SK-N-SH (cell line): ENCODE measurements at regions of chr7 and their contacts with region 1.

Region 1: GRCh38 chr7:134514663-134515062 is 12.7 kb upstream of the AKR1B10 start:
- DNase-seq: peak; percentile 68
- H3K4me3 ChIP-seq: no peak overlapping the region
- H3K27ac ChIP-seq: no peak overlapping the region
- H3K4me1 ChIP-seq: peaks cover 0 to 6% of the 10 kb centered on the region in 2 experiments; a peak in 1 of 4 replicates
- H3K27me3 ChIP-seq: 0 out of 2 replicates have a peak, but pooled peaks cover 16% of the 10 kb centered on the region
- CTCF ChIP-seq: peak; percentile 98
- EP300 ChIP-seq: no peak
- RAD21 ChIP-seq: peak; percentile 66

Region 2: GRCh38 chr7:134287916-134288659 is 226.6 kb before region 1 on chr7:
- CTCF ChIA-PET with region 1: no interaction called
- POLR2A ChIA-PET with region 1: no interaction called
- DNase-seq: no peak
- H3K4me3 ChIP-seq: no peak overlapping the region
- H3K27ac ChIP-seq: peak overlapping the region in 1 of 2 experiments; percentile 3; a peak in 1 of 4 replicates
- H3K4me1 ChIP-seq: peaks cover 0 to 5% of the 10 kb centered on the region in 2 experiments; a peak in 2 of 4 replicates
- H3K27me3 ChIP-seq: no peaks in the 10 kb centered on the region
- CTCF ChIP-seq: no peak
- EP300 ChIP-seq: no peak
- RAD21 ChIP-seq: no peak

Region 3: DNA sequence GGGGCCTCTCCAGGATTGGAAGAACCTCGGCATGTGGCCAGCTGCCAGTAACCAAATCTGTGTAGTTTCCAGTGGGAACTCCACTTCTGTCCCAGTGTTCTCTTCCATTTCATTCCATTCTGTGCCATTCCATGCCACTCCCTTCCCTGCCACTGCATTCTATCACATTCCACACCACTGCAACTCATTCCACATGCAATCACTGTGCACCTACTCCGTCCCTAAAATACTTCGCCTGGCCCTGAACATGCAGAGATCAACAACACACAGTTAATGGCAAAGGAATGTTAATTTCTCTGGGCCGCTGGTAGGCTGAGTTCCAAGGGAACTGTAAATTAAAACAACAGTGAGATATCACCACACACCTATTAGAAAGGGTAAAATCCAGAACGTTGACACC is 120.6 kb before region 1 on chr7:
- CTCF ChIA-PET with region 1: no interaction called
- POLR2A ChIA-PET with region 1: no interaction called
- DNase-seq: no peak
- H3K4me3 ChIP-seq: no peak overlapping the region
- H3K27ac ChIP-seq: no peak overlapping the region
- H3K4me1 ChIP-seq: no peaks in the 10 kb centered on the region
- H3K27me3 ChIP-seq: peaks cover 6% of the 10 kb centered on the region; the same call in 1 of the 2 replicates
- CTCF ChIP-seq: no peak
- EP300 ChIP-seq: no peak
- RAD21 ChIP-seq: no peak

Region 4: DNA sequence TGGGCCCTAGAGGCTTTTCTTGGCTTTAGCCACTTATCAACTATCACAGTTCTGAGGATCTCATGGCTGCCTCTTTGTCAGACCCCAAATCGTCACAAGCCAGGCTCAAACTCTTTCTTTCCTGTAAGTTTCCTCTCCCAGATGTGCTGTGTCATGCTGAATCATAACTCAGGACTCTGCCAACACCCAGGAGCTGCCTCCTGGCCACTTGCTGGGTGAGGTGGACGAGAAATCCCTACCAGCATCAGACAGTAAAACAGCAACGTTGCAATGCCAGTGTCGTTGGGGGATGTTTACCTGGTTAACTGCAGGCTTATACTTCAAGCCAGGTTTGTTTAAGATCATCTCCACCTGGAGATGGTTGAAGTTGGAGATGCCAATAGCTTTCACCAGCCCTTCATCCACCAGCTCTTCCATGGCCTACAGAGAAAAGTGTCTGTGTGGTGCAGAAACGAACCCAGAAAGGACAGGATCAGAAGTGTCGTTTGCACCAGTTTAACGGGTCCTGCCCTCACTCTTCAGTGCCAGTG is 65.9 kb before region 1 on chr7:
- CTCF ChIA-PET with region 1: interaction called, 21 read pairs
- POLR2A ChIA-PET with region 1: no interaction called
- DNase-seq: no peak
- H3K4me3 ChIP-seq: no peak overlapping the region
- H3K27ac ChIP-seq: peak overlapping the region in 1 of 2 experiments; percentile 43; a peak in 2 of 4 replicates
- H3K4me1 ChIP-seq: peaks cover 11 to 19% of the 10 kb centered on the region in 2 experiments; a peak in 2 of 4 replicates
- H3K27me3 ChIP-seq: no peaks in the 10 kb centered on the region
- CTCF ChIP-seq: no peak
- EP300 ChIP-seq: no peak
- RAD21 ChIP-seq: no peak

Region 5: GRCh38 chr7:134480736-134481135 is 33.9 kb before region 1 on chr7:
- CTCF ChIA-PET with region 1: interaction called, 50 read pairs
- POLR2A ChIA-PET with region 1: no interaction called
- DNase-seq: no peak
- H3K4me3 ChIP-seq: no peak overlapping the region
- H3K27ac ChIP-seq: no peak overlapping the region
- H3K4me1 ChIP-seq: peaks cover 0 to 7% of the 10 kb centered on the region in 2 experiments; a peak in 2 of 4 replicates
- H3K27me3 ChIP-seq: no peaks in the 10 kb centered on the region; the same call in 1 of the 2 replicates
- CTCF ChIP-seq: no peak
- EP300 ChIP-seq: no peak
- RAD21 ChIP-seq: no peak

Region 6: DNA sequence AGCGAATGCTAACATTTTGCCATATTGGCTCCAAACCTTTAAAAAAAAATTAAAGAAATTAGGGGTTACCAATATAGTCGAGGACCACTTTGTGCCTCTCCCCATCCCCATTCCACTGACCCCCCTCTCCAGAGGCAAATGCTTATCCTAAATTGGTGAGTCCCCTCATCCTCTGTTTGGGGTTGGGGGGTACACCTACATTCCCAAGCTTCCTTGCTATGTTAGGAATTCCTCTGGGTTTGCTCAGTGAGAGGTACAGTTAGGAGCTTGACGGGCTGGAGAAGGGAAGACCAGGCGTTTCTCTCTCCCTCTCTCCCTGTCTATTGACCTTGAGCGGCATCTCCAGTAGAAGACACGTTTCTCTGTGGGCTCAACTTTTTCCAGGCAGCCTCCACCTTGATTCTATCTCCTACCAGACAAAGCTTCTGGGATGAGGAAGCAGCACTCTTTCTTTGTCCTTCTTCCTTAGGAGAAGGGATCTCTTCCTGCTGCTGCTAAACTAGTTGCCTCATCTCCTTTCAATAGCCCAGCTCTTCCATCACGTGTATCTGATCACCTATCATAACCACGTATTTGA is 27.6 kb after region 1 on chr7:
- CTCF ChIA-PET with region 1: interaction called, 28 read pairs
- POLR2A ChIA-PET with region 1: no interaction called
- DNase-seq: no peak
- H3K4me3 ChIP-seq: no peak overlapping the region
- H3K27ac ChIP-seq: no peak overlapping the region
- H3K4me1 ChIP-seq: no peaks in the 10 kb centered on the region; a peak in 1 of 4 replicates
- H3K27me3 ChIP-seq: peaks cover 58% of the 10 kb centered on the region
- CTCF ChIP-seq: no peak
- EP300 ChIP-seq: no peak
- RAD21 ChIP-seq: no peak

Region 7: DNA sequence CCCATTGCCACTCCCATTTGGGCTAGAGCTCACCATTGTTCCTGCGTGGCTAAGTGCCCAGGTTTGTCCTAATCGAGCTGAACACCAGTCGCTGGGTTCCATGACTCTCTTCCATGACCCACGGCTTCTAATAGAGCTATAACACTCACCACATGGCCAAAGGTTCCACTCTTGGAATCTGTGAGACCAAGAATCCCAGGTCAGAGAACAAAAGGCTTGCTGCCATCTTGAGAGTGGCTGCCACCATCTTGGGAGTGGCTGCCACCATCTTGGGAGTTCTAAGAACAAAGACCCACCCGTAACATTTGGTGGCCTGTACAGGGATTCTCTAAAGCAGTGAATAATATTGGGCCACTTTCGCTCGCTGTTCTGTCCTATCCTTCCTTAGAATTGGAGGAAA is 71.2 kb after region 1 on chr7:
- CTCF ChIA-PET with region 1: interaction called, 10 read pairs
- POLR2A ChIA-PET with region 1: no interaction called
- DNase-seq: no peak
- H3K4me3 ChIP-seq: no peak overlapping the region
- H3K27ac ChIP-seq: no peak overlapping the region
- H3K4me1 ChIP-seq: no peaks in the 10 kb centered on the region; a peak in 1 of 4 replicates
- H3K27me3 ChIP-seq: peaks cover 18% of the 10 kb centered on the region; the same call in 1 of the 2 replicates
- CTCF ChIP-seq: no peak
- EP300 ChIP-seq: no peak
- RAD21 ChIP-seq: no peak

Region 8: GRCh38 chr7:134619627-134620331 is 105.1 kb after region 1 on chr7:
- CTCF ChIA-PET with region 1: interaction called, 10 read pairs
- POLR2A ChIA-PET with region 1: no interaction called
- DNase-seq: no peak
- H3K4me3 ChIP-seq: no peak overlapping the region
- H3K27ac ChIP-seq: peak overlapping the region in 1 of 2 experiments; percentile 99; a peak in 2 of 4 replicates
- H3K4me1 ChIP-seq: peaks cover 0 to 27% of the 10 kb centered on the region in 2 experiments; a peak in 1 of 4 replicates
- H3K27me3 ChIP-seq: no peaks in the 10 kb centered on the region
- CTCF ChIP-seq: no peak
- EP300 ChIP-seq: peak in 1 of 2 experiments; percentile 48; a peak in 1 of 4 replicates
- RAD21 ChIP-seq: no peak

Region 9: DNA sequence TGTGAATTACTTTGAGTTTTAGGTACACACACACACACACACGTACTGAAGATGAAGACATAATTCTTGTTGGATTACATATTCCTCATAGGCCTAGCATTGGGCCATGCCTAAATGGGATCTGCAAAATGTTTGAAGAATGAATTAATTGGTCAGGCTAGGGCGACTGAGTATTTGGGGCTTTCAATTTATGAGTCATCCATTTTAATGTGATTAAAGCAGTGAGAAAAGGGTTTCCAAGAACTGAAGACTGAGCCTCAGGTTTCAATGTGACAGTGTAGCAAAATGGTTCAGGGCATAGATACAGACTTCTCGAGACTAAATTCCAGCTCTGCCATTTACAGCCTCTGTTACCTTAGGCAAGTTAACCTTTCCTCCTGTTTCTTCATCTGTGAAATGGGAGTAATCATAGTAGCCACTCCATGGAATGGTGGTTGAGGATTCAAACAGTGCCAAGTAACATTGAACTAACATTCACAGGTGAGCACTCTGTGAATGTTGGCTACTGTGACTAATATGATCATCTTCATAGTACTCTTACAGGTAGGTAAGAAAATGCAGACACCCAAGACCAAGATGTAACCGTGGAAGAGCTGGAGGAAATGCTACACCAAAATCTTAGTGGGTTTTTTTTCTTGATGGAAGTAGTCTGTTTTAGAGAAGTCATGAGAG is 139.6 kb after region 1 on chr7:
- CTCF ChIA-PET with region 1: no interaction called
- POLR2A ChIA-PET with region 1: no interaction called
- DNase-seq: no peak
- H3K4me3 ChIP-seq: no peak overlapping the region
- H3K27ac ChIP-seq: no peak overlapping the region; a peak in 1 of 4 replicates
- H3K4me1 ChIP-seq: peaks cover 0 to 14% of the 10 kb centered on the region in 2 experiments; a peak in 2 of 4 replicates
- H3K27me3 ChIP-seq: no peaks in the 10 kb centered on the region
- CTCF ChIP-seq: no peak
- EP300 ChIP-seq: no peak
- RAD21 ChIP-seq: no peak

Region 10: DNA sequence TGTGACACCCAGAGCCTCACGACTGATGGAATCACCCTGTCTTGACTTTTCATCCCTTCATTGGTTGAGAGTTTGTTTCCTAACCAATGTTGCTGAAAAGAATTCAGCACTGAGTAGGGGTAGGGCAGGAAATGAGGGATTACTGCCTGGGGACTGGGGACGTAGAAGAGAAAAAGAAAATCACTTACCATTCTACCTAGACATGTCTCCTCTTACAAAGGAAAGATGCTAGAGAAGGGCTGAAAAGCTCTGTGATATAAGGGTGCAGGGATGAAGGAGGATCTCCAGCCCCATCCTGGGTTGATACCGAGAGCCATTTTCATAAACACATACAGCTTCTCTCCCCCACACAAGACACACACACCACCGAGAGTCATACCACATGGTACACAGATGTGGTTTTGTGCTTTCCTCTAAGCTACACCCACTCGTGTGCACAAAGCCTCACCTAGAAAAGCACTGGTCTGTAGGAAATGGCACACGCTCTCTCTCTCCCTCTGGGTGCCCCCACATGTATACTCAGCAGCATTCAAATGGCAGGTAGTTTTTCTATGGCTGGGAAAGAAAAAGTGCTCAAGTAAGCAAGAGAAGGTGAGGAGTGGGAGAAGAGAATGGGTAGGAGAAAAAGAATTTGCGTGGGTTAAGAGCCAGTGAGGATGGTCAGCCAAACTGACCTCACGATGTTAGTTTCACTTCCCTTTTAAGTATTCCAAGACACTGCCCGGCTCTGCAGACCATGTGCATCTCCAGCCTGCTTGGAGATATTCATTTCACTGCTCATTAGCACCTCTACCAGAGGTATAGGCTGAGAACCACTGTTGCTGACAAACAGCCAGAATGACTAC is 350.6 kb after region 1 on chr7:
- CTCF ChIA-PET with region 1: no interaction called
- POLR2A ChIA-PET with region 1: no interaction called
- DNase-seq: no peak
- H3K4me3 ChIP-seq: no peak overlapping the region
- H3K27ac ChIP-seq: no peak overlapping the region
- H3K4me1 ChIP-seq: peaks cover 0 to 6% of the 10 kb centered on the region in 2 experiments; a peak in 3 of 4 replicates
- H3K27me3 ChIP-seq: no peaks in the 10 kb centered on the region
- CTCF ChIP-seq: no peak
- EP300 ChIP-seq: no peak
- RAD21 ChIP-seq: no peak